ENCODE measurements at regions of chr3 and their contacts with region 1.

Region 1: GRCh38 chr3:196159952-196160804 is 51.0 kb downstream of the ZDHHC19 start:
- DNase-seq: peak; percentile 72
- ATAC-seq: peak; percentile 100
- H3K4me3 ChIP-seq: peak overlapping the region; percentile 14; the same call in 1 of the 2 replicates
- H3K27ac ChIP-seq: peak overlapping the region; percentile 66
- H3K4me1 ChIP-seq: peaks cover 12% of the 10 kb centered on the region
- H3K27me3 ChIP-seq: no peaks in the 10 kb centered on the region
- CTCF ChIP-seq: no peak
- EP300 ChIP-seq: 0 out of 4 replicates have a peak, but pooled peaks of 1 of the 2 experiments have one; percentile 10
- POLR2A ChIP-seq: peak; percentile 74
- RAD21 ChIP-seq: no peak

Region 2: GRCh38 chr3:196186651-196187573 is 26.7 kb after region 1 on chr3:
- CTCF ChIA-PET with region 1: interaction called, 4 read pairs
- POLR2A ChIA-PET with region 1: interaction called, 24 read pairs
- RAD21 ChIA-PET with region 1: interaction called, 54 read pairs
- SMC1A ChIA-PET with region 1: interaction called, 40 read pairs
- in situ Hi-C with region 1: no loop called
- intact Hi-C with region 1: no loop called
- DNase-seq: peak; percentile 64
- ATAC-seq: peak; percentile 67
- H3K4me3 ChIP-seq: peak overlapping the region; percentile 66; the same call in 1 of the 2 replicates
- H3K27ac ChIP-seq: peak overlapping the region; percentile 95
- H3K4me1 ChIP-seq: peaks cover 70% of the 10 kb centered on the region
- H3K27me3 ChIP-seq: no peaks in the 10 kb centered on the region
- CTCF ChIP-seq: no peak
- EP300 ChIP-seq: no peak; a peak in 2 of 4 replicates
- POLR2A ChIP-seq: peak; percentile 74
- RAD21 ChIP-seq: no peak

Region 3: DNA sequence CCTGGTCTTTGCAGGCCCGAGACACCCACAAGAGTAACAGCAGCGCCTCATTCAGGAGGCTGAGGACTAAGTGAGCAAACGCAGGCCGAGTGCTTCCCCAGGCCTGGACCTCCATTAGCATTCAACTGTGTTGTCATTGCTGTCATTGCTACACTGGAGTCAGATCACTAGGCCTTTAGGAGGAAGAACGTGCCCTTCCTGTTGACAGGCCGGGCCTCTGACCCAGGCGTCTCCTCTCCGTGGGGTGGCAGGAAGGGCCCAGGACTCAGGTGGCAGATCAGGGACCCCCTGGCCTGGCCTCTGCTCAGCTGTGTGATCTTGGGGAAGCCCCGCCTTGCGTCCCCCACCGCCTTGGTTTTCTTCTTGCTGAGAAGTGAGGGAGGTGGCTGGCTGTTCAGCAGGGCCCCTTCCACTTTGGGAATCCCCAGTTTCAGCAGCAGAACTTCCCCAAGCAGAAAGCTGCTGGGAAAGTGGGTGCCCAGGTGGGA is 31.9 kb after region 1 on chr3:
- CTCF ChIA-PET with region 1: interaction called, 4 read pairs
- POLR2A ChIA-PET with region 1: interaction called, 7 read pairs
- RAD21 ChIA-PET with region 1: interaction called, 23 read pairs
- SMC1A ChIA-PET with region 1: interaction called, 22 read pairs
- in situ Hi-C with region 1: no loop called
- intact Hi-C with region 1: no loop called
- DNase-seq: peak; percentile 74
- ATAC-seq: peak; percentile 77
- H3K4me3 ChIP-seq: peak overlapping the region; percentile 53; the same call in 1 of the 2 replicates
- H3K27ac ChIP-seq: peak overlapping the region; percentile 83
- H3K4me1 ChIP-seq: peaks cover 55% of the 10 kb centered on the region
- H3K27me3 ChIP-seq: no peaks in the 10 kb centered on the region
- CTCF ChIP-seq: peak in 1 of 3 experiments; percentile 5; a peak in 1 of 6 replicates
- EP300 ChIP-seq: peak; percentile 34 to 53; a peak in 3 of 4 replicates
- POLR2A ChIP-seq: peak; percentile 62
- RAD21 ChIP-seq: peak; percentile 42; the same call in 1 of the 2 replicates